ENCODE measurements at regions of chr2 and their contacts with region 1.

Region 1: GRCh38 chr2:208249241-208249640 is 5.6 kb downstream of the IDH1 start:
- DNase-seq: no peak
- ATAC-seq: no peak
- H3K4me3 ChIP-seq: no peak overlapping the region
- H3K27ac ChIP-seq: no peak overlapping the region
- H3K4me1 ChIP-seq: peaks cover 0 to 62% (median 16%) of the 10 kb centered on the region in 12 donors
- H3K27me3 ChIP-seq: no peaks in the 10 kb centered on the region
- CTCF ChIP-seq: no peak
- POLR2A ChIP-seq: no peak

Region 2: DNA sequence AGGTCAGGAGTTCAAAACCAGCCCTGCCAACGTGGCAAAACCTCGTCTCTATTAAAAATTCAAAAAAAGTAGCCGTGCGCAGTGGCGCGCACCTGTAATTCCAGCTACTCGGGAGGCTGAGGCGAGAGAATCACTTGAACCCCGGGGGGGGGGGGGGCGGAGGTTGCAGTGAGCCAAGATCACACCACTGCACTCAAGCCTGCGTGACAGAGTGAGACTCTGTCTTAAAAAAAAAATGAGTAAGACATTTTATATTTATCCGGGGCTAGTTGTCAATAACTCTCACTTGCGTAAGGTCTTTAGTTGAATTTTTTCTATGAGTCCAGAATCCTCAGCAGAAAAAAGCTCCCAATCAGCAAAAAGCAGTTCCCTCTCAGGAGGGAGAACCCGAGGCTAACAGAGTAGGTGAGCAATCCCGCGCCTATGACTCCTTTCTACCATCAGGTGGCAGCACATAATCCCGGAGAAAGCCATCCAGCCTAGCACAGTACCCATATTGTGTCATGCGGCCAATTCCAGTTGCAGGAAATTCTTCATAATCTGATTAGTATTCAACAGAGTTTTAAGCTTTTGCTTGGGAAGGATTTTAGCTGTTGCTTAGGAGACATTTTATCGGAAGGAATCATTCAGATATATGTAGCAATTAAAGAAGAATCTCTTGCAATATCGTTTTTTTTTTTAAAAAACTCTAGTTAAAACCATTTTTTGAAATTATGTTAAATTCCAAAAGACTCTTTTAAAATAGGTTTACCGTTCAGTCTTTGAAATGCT is 74.0 kb before region 1 on chr2:
- intact Hi-C with region 1: loop called in 8 of 10 experiments (anchors 1 to 10 kb)
- DNase-seq: peak; percentile 61 to 77 (median 67)
- ATAC-seq: peak; percentile 90 to 98 (median 96)
- H3K4me3 ChIP-seq: no peak overlapping the region
- H3K27ac ChIP-seq: no peak overlapping the region
- H3K4me1 ChIP-seq: peaks cover 0 to 34% (median 0%) of the 10 kb centered on the region in 12 donors
- H3K27me3 ChIP-seq: peaks cover 0 to 5% (median 0%) of the 10 kb centered on the region in 9 donors
- CTCF ChIP-seq: peak; percentile 79 to 93 (median 87)
- POLR2A ChIP-seq: no peak